Right ventricle myocardium inferior (tissue), 1 donor: ENCODE measurements at regions of chrX and their contacts with region 1.

Region 1: DNA sequence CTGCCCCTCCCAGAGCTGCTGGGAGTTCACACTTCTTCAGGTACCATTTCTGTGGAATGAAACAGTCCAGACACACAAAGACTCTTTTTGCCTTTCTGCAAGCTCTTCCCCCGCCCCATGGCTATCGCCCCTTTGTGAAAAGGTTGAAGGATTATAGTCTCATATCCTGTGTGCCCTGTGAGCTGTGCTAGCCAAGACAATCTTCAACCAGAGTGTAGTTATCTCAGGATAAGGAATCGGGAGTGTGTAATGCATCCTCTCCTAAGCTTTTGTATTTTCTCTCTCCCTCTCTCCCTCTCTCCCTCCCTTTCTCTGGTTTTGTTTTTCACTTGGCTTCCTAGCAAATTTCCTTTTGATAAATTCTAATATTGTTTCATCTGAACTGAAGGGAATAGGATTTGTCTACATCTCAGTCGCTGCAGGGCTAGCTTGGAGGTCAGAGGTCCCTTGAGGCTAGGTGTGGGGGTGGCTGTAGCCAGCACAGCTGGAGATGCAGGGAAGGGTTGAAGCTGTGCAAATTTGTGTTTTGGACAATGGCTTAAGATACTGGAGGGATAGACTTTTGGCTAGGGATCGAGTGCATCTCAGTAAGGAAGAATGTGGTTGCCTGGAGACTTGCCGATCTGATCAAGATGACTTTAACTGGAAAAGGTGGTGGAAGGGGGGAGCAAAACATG is 74.6 kb upstream of the NALF2 start:
- DNase-seq: no peak
- ATAC-seq: peak; percentile 84

Region 2: GRCh38 chrX:70089604-70090297 is 660.3 kb after region 1 on chrX:
- intact Hi-C with region 1: loop called (anchors 5 kb)
- DNase-seq: no peak
- ATAC-seq: no peak